HEK293 (cell line): ENCODE measurements at regions of chr18 and their contacts with region 1.

Region 1: DNA sequence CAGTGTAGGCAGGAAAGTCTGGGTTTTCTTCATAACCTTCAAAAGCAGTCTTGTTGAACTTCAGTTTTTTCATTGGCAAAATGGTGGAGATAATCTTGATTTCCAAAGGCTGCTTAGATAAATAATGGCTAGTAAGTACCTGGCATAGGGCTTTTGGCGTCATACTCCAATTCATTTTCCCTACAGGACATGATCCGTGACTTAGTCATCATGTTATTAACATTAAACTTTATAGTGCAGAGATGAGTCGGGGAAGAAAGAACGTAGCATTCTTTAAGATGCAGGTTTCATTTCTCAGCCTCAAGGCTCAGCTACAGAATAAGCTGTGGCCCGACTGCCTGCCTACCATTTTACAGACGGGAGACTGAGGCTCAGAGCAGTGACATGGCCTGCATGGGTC is 64.0 kb downstream of the RALBP1 start:
- H3K4me3 ChIP-seq: no peak overlapping the region
- H3K27ac ChIP-seq: no peak overlapping the region
- H3K4me1 ChIP-seq: no peaks in the 10 kb centered on the region
- CTCF ChIP-seq: no peak

Region 2: DNA sequence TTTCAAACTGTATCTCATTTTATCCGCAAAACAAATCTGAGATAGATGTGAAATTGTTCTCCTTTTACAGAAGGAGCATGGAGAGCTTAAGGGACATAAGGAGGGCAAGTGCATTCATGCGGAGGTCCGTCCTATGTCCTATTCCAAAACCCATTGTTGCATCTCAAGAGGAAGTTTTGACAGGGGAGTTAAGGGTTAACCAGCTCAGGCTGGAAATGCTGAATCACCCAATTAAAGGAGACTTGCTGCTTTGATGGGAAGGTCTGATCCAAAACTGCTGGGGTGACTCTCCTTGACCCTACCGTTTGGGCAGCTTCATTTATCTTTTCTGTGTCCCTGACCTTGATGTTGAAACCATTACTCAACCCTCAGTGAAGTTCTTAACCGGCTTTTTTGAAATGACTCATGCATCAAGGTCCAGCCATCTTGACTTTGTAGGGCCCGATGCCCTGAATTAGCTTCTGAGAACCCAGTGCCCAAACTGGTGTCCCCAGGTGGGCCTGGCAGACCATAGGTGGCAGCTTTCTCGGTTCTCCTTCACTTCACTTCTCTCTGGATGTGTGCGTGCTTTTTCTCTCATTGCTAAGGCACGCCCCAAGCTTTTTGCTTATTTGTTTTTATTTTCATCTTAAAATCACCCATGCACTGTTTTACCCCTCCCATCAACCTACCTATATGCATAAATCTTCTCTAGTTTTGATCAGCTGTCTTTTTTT is 330.6 kb after region 1 on chr18:
- CTCF ChIA-PET with region 1: interaction called, 11 read pairs
- POLR2A ChIA-PET with region 1: no interaction called
- H3K4me3 ChIP-seq: no peak overlapping the region
- H3K27ac ChIP-seq: peak overlapping the region; percentile 49; the same call in 1 of the 2 replicates
- H3K4me1 ChIP-seq: peaks cover 15% of the 10 kb centered on the region
- CTCF ChIP-seq: no peak